ENCODE measurements at regions of chr7 and their contacts with region 1.

Region 1: GRCh38 chr7:66628361-66629140 is at the start of gene KCTD7:
- DNase-seq: peak; percentile 98 to 99 (median 98)
- H3K4me3 ChIP-seq: peak within 1 kb of the TSS; percentile 68 to 88 (median 81)
- H3K4me3 Mint-ChIP-seq: peak within 1 kb of the TSS; percentile 85 to 91
- H3K27ac ChIP-seq: peak within 1 kb of the TSS; percentile 98 to 99
- H3K27ac Mint-ChIP-seq: peak within 1 kb of the TSS; percentile 97 to 100 (median 99)
- H3K4me1 ChIP-seq: peaks cover 43 to 53% of the 10 kb centered on the region in 2 donors
- H3K4me1 Mint-ChIP-seq: peaks cover 45% of the 10 kb centered on the region
- H3K27me3 ChIP-seq: peaks cover 0 to 24% of the 10 kb centered on the region in 2 donors
- H3K27me3 Mint-ChIP-seq: peaks cover 12 to 50% (median 33%) of the 10 kb centered on the region in 3 donors
- CTCF ChIP-seq: no peak
- polyA plus RNA-seq, gene KCTD7: 1.8 to 9.2 (median 2.7) TPM

Region 2: DNA sequence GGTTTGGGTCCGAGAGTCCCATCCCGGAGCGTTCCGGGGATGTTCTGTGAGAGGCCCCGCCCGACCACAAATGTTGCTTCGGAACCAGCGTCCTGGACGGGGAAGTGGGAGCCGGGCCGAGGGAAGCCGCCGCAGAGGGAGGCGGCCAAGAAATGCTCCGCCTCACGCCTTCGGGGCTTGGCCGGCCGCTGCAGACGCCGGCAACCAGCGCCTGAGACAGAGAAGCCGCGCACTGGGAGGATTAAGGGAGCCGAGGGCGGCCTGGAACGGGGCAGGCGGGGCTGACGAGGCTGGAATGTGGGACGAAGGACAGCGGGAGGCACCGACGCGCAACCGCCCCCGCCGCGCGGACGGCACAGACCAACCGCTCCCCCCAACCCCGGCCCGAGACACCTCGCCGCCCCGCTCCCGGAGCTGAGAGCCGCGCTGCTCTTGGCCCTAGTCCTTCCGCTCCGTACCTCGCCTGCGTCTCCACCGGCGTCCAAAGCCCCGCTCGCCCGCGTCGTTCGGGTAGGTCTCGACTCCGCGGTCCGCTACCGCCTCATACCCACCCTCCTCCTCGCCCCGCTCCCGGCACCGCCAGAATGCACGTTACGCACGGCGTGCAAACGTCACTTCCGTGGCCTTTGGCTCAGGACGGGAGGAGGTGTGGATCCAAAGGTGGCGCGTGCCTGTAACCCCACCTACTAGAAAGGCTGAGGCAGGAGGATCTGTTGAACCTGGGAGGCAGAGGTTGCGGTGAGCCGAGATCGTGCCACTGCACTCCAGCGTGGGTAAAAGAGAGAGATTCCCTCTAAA is 36.6 kb before region 1 on chr7:
- intact Hi-C with region 1: loop called (anchors 1 to 5 kb)
- DNase-seq: peak; percentile 66 to 82 (median 80)
- H3K4me3 ChIP-seq: peak overlapping the region; percentile 85 to 91 (median 86)
- H3K4me3 Mint-ChIP-seq: peak overlapping the region; percentile 93 to 96
- H3K27ac ChIP-seq: peak overlapping the region; percentile 80 to 90
- H3K27ac Mint-ChIP-seq: peak overlapping the region; percentile 92 to 98 (median 95)
- H3K4me1 ChIP-seq: peaks cover 16 to 20% of the 10 kb centered on the region in 2 donors
- H3K4me1 Mint-ChIP-seq: peaks cover 35% of the 10 kb centered on the region
- H3K27me3 ChIP-seq: no peaks in the 10 kb centered on the region
- H3K27me3 Mint-ChIP-seq: peaks cover 2 to 7% (median 2%) of the 10 kb centered on the region in 3 donors
- CTCF ChIP-seq: no peak

Region 3: GRCh38 chr7:66654123-66654732 is 25.7 kb after region 1 on chr7:
- intact Hi-C with region 1: loop called (anchors 2 kb)
- DNase-seq: peak; percentile 98 to 99 (median 99)
- H3K4me3 ChIP-seq: peak overlapping the region; percentile 66 to 90 (median 86)
- H3K4me3 Mint-ChIP-seq: peak overlapping the region; percentile 90 to 95
- H3K27ac ChIP-seq: peak overlapping the region; percentile 98 to 99
- H3K27ac Mint-ChIP-seq: peak overlapping the region; percentile 97 to 100 (median 98)
- H3K4me1 ChIP-seq: peaks cover 14 to 25% of the 10 kb centered on the region in 2 donors
- H3K4me1 Mint-ChIP-seq: peaks cover 20% of the 10 kb centered on the region
- H3K27me3 ChIP-seq: peaks cover 0 to 2% of the 10 kb centered on the region in 2 donors
- H3K27me3 Mint-ChIP-seq: peaks cover 0 to 8% (median 7%) of the 10 kb centered on the region in 3 donors
- CTCF ChIP-seq: no peak

Region 4: GRCh38 chr7:66844552-66845378 is 216.2 kb after region 1 on chr7:
- intact Hi-C with region 1: no loop called
- DNase-seq: peak; percentile 99 to 100 (median 99)
- H3K4me3 ChIP-seq: peak overlapping the region; percentile 60 to 92 (median 92)
- H3K4me3 Mint-ChIP-seq: peak overlapping the region; percentile 85 to 93
- H3K27ac ChIP-seq: peak overlapping the region; percentile 90 to 99
- H3K27ac Mint-ChIP-seq: peak overlapping the region; percentile 99 to 100 (median 99)
- H3K4me1 ChIP-seq: peaks cover 32 to 53% of the 10 kb centered on the region in 2 donors
- H3K4me1 Mint-ChIP-seq: peaks cover 38% of the 10 kb centered on the region
- H3K27me3 ChIP-seq: no peaks in the 10 kb centered on the region
- H3K27me3 Mint-ChIP-seq: peaks cover 0 to 2% (median 2%) of the 10 kb centered on the region in 3 donors
- CTCF ChIP-seq: peak; percentile 28

Region 5: GRCh38 chr7:67302113-67303039 is 673.8 kb after region 1 on chr7:
- intact Hi-C with region 1: loop called in 1 of 2 experiments (anchors 10 kb)
- DNase-seq: peak; percentile 99
- H3K4me3 ChIP-seq: peak overlapping the region; percentile 81 to 85 (median 84)
- H3K4me3 Mint-ChIP-seq: peak overlapping the region; percentile 84 to 92
- H3K27ac ChIP-seq: peak overlapping the region; percentile 94 to 95
- H3K27ac Mint-ChIP-seq: peak overlapping the region; percentile 94 to 99 (median 97)
- H3K4me1 ChIP-seq: peaks cover 23 to 25% of the 10 kb centered on the region in 2 donors
- H3K4me1 Mint-ChIP-seq: peaks cover 37% of the 10 kb centered on the region
- H3K27me3 ChIP-seq: no peaks in the 10 kb centered on the region
- H3K27me3 Mint-ChIP-seq: peaks cover 0 to 2% (median 0%) of the 10 kb centered on the region in 3 donors
- CTCF ChIP-seq: peak; percentile 17